Esophagus muscularis mucosa (tissue), 4 donors: ENCODE measurements at regions of chr22 and their contacts with region 1.

Region 1: DNA sequence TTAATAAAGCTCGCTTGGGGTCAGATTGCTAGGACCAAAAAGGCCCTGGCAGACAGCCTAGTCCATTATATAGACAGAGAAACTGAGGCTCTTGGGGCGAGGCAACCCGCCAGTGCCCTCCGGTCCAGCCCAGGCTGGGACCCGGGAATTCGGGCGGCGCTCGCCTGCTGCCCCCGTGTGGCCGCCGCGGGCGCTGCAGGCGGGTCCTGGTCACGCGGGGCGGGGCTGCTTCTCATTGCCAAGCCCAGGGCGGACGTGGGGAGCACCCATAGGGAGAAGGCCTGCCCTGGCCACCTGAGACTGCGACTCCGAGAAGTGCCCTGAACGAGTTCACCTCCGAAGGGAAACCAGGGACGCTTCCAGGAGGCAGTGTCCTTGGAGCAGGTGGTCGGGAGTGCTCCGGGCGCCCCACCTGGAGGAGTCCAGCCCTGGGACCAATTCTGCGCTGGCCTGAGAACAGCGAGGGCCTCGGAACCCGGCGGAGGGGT is 36.0 kb upstream of the CSNK1E start:
- DNase-seq: peak; percentile 91
- H3K4me3 ChIP-seq: peak overlapping the region in 1 of 4 donors; percentile 12
- H3K27ac ChIP-seq: no peak overlapping the region
- H3K4me1 ChIP-seq: peaks cover 5 to 12% (median 8%) of the 10 kb centered on the region in 4 donors
- H3K27me3 ChIP-seq: no peaks in the 10 kb centered on the region
- CTCF ChIP-seq: peak in 2 of 3 experiments; percentile 99
- EP300 ChIP-seq: no peak
- POLR2A ChIP-seq: no peak

Region 2: GRCh38 chr22:38051900-38052862 is 301.0 kb before region 1 on chr22:
- intact Hi-C with region 1: loop called (anchors 5 kb)
- DNase-seq: no peak
- H3K4me3 ChIP-seq: no peak overlapping the region
- H3K27ac ChIP-seq: peak overlapping the region in 1 of 4 donors; percentile 2
- H3K4me1 ChIP-seq: peaks cover 14 to 27% (median 18%) of the 10 kb centered on the region in 4 donors
- H3K27me3 ChIP-seq: peaks cover 0 to 12% (median 0%) of the 10 kb centered on the region in 4 donors
- CTCF ChIP-seq: peak; percentile 75 to 91 (median 91)
- EP300 ChIP-seq: no peak
- POLR2A ChIP-seq: no peak

Region 3: GRCh38 chr22:38114484-38115398 is 238.4 kb before region 1 on chr22:
- intact Hi-C with region 1: loop called (anchors 5 kb)
- DNase-seq: peak; percentile 94
- H3K4me3 ChIP-seq: no peak overlapping the region
- H3K27ac ChIP-seq: no peak overlapping the region
- H3K4me1 ChIP-seq: peaks cover 7 to 12% (median 9%) of the 10 kb centered on the region in 4 donors
- H3K27me3 ChIP-seq: no peaks in the 10 kb centered on the region
- CTCF ChIP-seq: peak; percentile 84 to 98 (median 90)
- EP300 ChIP-seq: no peak
- POLR2A ChIP-seq: no peak

Region 4: DNA sequence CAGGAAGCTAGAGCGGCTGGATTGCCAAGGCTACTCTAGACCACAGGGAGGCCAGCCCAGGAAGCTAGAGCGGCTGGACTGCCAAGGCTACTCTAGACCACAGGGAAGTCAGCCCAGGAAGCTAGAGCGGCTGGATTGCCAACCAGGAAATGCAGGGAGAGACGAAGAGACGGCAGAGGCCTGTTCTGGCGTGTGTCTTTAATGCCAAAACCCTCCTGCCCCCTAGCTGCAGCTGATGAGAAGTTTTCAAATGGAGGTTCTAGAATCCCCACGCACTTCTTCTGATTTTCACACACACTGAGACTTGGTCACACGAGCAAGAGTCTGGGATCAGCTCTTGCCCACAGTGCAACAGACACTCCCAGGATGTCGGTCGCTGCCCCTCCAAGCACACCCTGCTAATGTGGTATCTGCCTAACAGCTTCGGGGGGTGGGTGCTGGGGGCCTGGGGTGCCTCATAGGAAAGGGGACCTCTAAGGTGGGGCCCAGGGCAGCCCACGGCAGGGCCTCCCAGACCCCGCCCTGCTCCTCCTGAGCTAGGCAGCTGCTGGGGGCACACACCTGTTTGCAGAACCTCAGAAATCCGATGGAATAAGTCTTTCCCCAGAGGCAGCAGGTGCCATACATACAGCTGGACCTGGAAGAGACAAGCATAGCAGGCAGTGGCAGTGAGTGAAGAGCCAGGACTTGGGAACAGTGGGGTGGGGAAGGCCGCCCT is 122.9 kb before region 1 on chr22:
- intact Hi-C with region 1: loop called (anchors 10 kb)
- DNase-seq: no peak
- H3K4me3 ChIP-seq: no peak overlapping the region
- H3K27ac ChIP-seq: peak overlapping the region; percentile 28 to 64 (median 47)
- H3K4me1 ChIP-seq: peaks cover 30 to 44% (median 39%) of the 10 kb centered on the region in 4 donors
- H3K27me3 ChIP-seq: no peaks in the 10 kb centered on the region
- CTCF ChIP-seq: peak; percentile 26 to 48 (median 39)
- EP300 ChIP-seq: no peak
- POLR2A ChIP-seq: no peak

Region 5: GRCh38 chr22:38262051-38262795 is 91.0 kb before region 1 on chr22:
- intact Hi-C with region 1: loop called (anchors 10 kb)
- DNase-seq: no peak
- H3K4me3 ChIP-seq: no peak overlapping the region
- H3K27ac ChIP-seq: peak overlapping the region; percentile 83 to 91 (median 88)
- H3K4me1 ChIP-seq: peaks cover 87 to 99% (median 91%) of the 10 kb centered on the region in 4 donors
- H3K27me3 ChIP-seq: no peaks in the 10 kb centered on the region
- CTCF ChIP-seq: peak; percentile 44 to 61 (median 51)
- EP300 ChIP-seq: no peak
- POLR2A ChIP-seq: no peak